Cardiac septum (tissue), 1 donor: ENCODE measurements at regions of chr16 and their contacts with region 1.

Region 1: DNA sequence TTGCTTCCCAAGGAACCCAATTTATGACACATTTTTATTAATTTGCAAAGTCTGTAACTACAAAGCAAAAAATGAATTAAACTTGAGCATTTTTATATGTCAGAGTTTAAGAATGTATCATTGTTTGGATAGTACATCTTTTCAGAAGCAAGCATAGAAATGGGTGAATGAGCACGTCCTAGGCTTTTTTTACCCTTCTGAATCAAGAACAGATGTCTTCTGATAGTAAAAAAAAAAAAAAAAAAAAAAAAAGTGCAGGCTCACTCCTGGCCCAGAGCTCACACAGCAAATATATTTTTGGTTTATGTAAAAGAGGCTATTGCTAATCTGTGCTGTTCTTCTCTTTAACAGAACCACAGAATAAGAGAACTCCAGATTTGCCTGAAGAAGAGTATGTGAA is 6.3 kb downstream of the TERF2IP start:
- DNase-seq: no peak

Region 2: GRCh38 chr16:75244844-75245758 is 408.8 kb before region 1 on chr16:
- intact Hi-C with region 1: loop called (anchors 5 kb)
- DNase-seq: peak; percentile 92

Region 3: GRCh38 chr16:75710344-75710743 is 56.4 kb after region 1 on chr16:
- intact Hi-C with region 1: loop called (anchors 10 kb)
- DNase-seq: no peak